Transverse colon (tissue), 4 donors: ENCODE measurements at regions of chr5 and their contacts with region 1.

Region 1: GRCh38 chr5:56565644-56566043 is 249.7 kb upstream of the MAP3K1 start:
- DNase-seq: no peak
- H3K4me3 ChIP-seq: no peak overlapping the region
- H3K27ac ChIP-seq: no peak overlapping the region
- H3K4me1 ChIP-seq: peaks cover 0 to 5% (median 0%) of the 10 kb centered on the region in 4 donors
- H3K27me3 ChIP-seq: no peaks in the 10 kb centered on the region
- CTCF ChIP-seq: no peak
- EP300 ChIP-seq: no peak
- POLR2A ChIP-seq: no peak

Region 2: GRCh38 chr5:55096861-55097260 is 1468.8 kb before region 1 on chr5:
- in situ Hi-C with region 1: no loop called
- intact Hi-C with region 1: loop called (anchors 5 kb)
- DNase-seq: peak; percentile 11
- H3K4me3 ChIP-seq: no peak overlapping the region
- H3K27ac ChIP-seq: no peak overlapping the region
- H3K4me1 ChIP-seq: no peaks in the 10 kb centered on the region
- H3K27me3 ChIP-seq: no peaks in the 10 kb centered on the region
- CTCF ChIP-seq: no peak
- EP300 ChIP-seq: no peak
- POLR2A ChIP-seq: no peak

Region 3: GRCh38 chr5:57566914-57567313 is 1001.3 kb after region 1 on chr5:
- in situ Hi-C with region 1: no loop called
- intact Hi-C with region 1: no loop called
- DNase-seq: no peak
- H3K4me3 ChIP-seq: no peak overlapping the region
- H3K27ac ChIP-seq: no peak overlapping the region
- H3K4me1 ChIP-seq: no peaks in the 10 kb centered on the region
- H3K27me3 ChIP-seq: no peaks in the 10 kb centered on the region
- CTCF ChIP-seq: no peak
- EP300 ChIP-seq: no peak
- POLR2A ChIP-seq: no peak